Calu3 (cell line): ENCODE measurements at regions of chr6 and their contacts with region 1.

Region 1: GRCh38 chr6:71489747-71490315 is 201.2 kb downstream of the OGFRL1 start:
- DNase-seq: peak; percentile 67
- H3K4me3 Mint-ChIP-seq: peak overlapping the region; percentile 15
- H3K27ac Mint-ChIP-seq: peak overlapping the region; percentile 48
- H3K4me1 Mint-ChIP-seq: peaks cover 52% of the 10 kb centered on the region
- H3K27me3 Mint-ChIP-seq: no peaks in the 10 kb centered on the region
- CTCF ChIP-seq: no peak

Region 2: DNA sequence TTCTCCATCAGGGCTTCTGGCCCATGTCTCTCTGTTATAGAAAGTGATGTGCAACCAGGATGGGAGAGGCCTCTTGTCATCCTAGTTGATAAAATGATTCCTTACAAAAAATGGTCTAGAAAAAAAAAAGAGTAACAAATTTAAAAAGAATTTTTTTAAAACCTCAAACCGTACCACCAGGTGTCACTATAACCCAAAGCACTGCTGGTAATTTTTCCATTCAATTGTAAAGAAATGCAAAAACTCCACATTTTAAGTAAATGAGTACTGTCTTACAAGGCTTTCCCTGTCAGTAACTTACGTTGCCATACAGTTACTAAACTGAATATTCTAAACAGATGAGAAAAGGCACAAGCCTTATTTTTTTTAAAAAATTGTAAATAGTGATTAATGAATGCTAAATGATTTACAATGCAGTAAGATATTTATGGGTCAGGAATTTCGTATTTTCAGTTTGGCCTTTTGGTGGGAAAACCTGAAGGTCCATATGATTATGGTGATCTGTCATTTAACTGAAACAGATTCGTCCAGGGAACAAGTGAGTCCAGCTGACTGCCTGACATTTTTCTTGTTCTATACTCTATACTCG is 105.8 kb before region 1 on chr6:
- CTCF ChIA-PET with region 1: interaction called, 15 read pairs
- intact Hi-C with region 1: loop called (anchors 5 kb)
- DNase-seq: peak; percentile 56
- H3K4me3 Mint-ChIP-seq: no peak overlapping the region
- H3K27ac Mint-ChIP-seq: peak overlapping the region; percentile 75
- H3K4me1 Mint-ChIP-seq: peaks cover 49% of the 10 kb centered on the region
- H3K27me3 Mint-ChIP-seq: no peaks in the 10 kb centered on the region
- CTCF ChIP-seq: peak; percentile 74